Heart left ventricle (tissue), 16 donors: ENCODE measurements at regions of chr4 and their contacts with region 1.

Region 1: DNA sequence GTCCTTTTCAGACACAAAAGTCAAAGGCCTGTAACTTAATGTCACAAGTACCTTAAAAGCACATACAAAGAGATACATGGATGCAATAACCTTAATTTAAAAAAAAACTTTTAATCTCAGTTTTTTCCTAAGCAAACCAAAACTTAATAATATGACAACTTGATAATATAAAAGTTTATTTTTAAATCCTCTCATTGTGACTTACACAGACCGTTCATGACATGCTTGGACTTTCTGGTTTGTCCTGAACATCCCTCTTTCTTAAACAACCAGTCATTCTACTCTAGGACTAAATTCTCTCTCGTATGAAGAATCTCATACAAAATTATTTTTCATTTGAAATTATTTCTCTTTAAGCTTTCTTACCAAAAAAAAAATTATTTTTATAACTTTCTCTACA is 43.1 kb upstream of the CYP2U1 start:
- DNase-seq: no peak
- ATAC-seq: no peak
- H3K4me3 ChIP-seq: no peak overlapping the region
- H3K27ac ChIP-seq: no peak overlapping the region
- H3K4me1 ChIP-seq: peaks cover 0 to 3% (median 0%) of the 10 kb centered on the region in 12 donors
- H3K27me3 ChIP-seq: no peaks in the 10 kb centered on the region
- CTCF ChIP-seq: no peak
- POLR2A ChIP-seq: no peak

Region 2: DNA sequence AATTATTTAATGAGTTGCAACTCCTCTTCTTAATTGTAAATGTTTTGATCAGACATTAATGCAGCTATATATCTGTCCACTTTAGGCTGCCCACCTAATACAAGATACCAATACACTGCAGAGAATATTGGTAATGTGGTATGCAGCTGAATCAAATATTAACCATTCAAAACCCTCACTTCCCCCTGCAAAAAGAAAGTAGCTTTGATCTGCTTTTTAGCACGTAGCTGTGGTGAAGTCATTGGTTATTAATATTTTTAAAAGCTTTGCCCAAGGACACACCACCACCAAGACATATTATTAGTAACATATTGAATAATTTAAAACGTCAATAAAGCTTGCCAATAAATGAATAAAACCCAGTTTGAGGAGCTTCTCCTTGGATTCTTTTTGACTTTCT is 14.5 kb after region 1 on chr4:
- intact Hi-C with region 1: loop called in 1 of 10 experiments (anchors 1 kb)
- DNase-seq: no peak
- ATAC-seq: no peak
- H3K4me3 ChIP-seq: no peak overlapping the region
- H3K27ac ChIP-seq: peak overlapping the region in 2 of 12 donors; percentile 2 to 66
- H3K4me1 ChIP-seq: peaks cover 0 to 7% (median 0%) of the 10 kb centered on the region in 12 donors
- H3K27me3 ChIP-seq: no peaks in the 10 kb centered on the region
- CTCF ChIP-seq: no peak
- POLR2A ChIP-seq: no peak